Aorta (tissue), 5 donors: ENCODE measurements at regions of chr2 and their contacts with region 1.

Region 1: DNA sequence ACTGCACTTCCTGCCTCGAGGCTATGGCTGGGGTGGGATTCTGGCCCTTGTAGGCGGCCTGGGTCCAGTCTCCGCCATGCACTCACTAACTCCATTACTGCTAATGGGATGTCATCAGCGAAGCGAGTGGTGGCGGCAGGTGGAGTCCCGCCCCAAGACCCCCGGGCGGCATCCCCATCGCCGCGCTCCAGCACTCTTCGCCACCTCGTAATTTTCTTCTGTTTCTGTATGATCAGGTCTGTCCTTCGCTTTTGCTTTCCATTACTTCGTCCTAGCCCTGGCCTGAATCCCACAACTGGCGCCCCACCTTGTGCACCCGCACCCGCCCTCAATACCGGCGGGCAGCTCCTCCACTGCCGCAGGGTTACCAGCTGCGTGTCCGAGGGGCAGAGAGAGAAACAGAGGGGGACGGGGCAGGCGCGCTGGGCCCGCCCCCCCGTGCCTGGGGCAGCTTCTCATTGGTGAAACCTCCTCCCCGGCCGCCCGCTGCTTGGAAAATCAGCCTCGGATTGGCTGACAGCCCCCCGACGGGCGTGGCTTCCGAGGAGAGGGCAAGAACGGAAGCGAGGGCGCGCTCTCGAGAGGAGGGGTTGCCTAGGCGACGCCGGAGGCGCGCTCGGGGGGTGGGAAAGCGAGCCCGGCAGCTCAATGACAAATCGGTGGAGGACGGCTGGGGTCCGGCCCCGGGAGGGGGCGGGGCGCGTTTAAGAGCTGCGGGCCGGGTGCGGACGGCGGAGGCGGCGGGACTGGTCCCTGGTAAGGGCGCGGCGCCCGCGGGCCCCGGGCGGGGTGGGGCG is at the start of gene RALB:
- DNase-seq: peak; percentile 100
- ATAC-seq: peak; percentile 98
- H3K4me3 ChIP-seq: peak within 1 kb of the TSS; percentile 62 to 66
- H3K27ac ChIP-seq: peak within 1 kb of the TSS in 1 of 2 donors; percentile 29
- H3K4me1 ChIP-seq: peaks cover 0 to 5% of the 10 kb centered on the region in 2 donors
- H3K27me3 ChIP-seq: no peaks in the 10 kb centered on the region
- total RNA-seq, gene RALB: 43.3 to 55.0 TPM

Region 2: GRCh38 chr2:120223034-120223912 is 29.1 kb before region 1 on chr2 and contains the start of gene TMEM185B:
- intact Hi-C with region 1: loop called in 1 of 2 experiments (anchors 2 kb)
- DNase-seq: peak; percentile 92 to 97
- ATAC-seq: peak; percentile 97
- H3K4me3 ChIP-seq: peak within 1 kb of the TSS; percentile 46 to 65
- H3K27ac ChIP-seq: peak within 1 kb of the TSS in 1 of 2 donors; percentile 20
- H3K4me1 ChIP-seq: no peaks in the 10 kb centered on the region
- H3K27me3 ChIP-seq: no peaks in the 10 kb centered on the region
- total RNA-seq, gene TMEM185B: 17.5 to 20.8 TPM

Region 3: DNA sequence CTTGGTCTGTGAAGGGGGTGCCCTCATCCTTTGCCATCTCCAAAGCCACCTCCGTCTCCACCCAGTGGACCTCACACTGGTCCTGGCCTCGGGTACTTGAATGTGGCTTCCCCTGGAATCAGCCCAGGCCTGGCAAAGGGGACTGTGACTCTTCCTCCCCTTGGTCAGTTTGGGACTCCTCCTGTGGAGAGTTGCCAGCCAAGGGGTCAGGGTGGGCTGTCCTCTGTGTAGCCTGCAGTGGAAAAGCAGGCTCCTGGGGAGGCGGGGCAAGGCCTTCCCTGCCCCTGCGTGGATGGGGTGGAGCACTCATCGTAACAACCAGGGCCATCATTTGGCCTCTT is 153.3 kb after region 1 on chr2:
- intact Hi-C with region 1: no loop called
- DNase-seq: no peak
- ATAC-seq: no peak
- H3K4me3 ChIP-seq: no peak overlapping the region
- H3K27ac ChIP-seq: no peak overlapping the region
- H3K4me1 ChIP-seq: no peaks in the 10 kb centered on the region
- H3K27me3 ChIP-seq: no peaks in the 10 kb centered on the region